Activated B cell treated with CpG ODN at 0.5 μM for 24 hours (primary cell): ENCODE measurements at regions of chr2 and their contacts with region 1.

Region 1: DNA sequence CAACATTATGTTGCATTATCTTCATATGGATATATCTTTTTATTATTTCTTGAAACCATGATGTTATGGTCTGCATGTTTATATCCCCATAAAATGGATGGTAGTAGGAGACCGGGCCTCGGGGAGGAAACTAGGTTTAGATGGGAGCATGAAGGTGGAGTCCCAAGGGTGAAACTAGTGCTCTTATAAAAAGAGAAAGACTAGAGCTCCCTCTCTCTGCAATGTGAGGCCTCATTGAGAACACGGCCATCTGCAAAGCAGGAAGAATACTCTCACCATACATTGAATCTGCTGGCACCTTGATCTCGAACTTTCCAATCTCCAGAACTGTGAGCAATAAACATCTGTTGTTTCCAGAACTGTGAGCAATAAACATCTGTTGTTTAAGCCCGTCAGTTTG is 64.0 kb downstream of the NXPH2 start:
- DNase-seq: no peak
- ATAC-seq: no peak
- H3K4me3 Mint-ChIP-seq: no peak overlapping the region
- H3K27ac Mint-ChIP-seq: no peak overlapping the region
- H3K4me1 Mint-ChIP-seq: no peaks in the 10 kb centered on the region
- H3K27me3 Mint-ChIP-seq: peaks cover 5% of the 10 kb centered on the region
- CTCF ChIP-seq: no peak

Region 2: GRCh38 chr2:137865954-137866540 is 850.1 kb before region 1 on chr2:
- CTCF ChIA-PET with region 1: no interaction called
- POLR2A ChIA-PET with region 1: no interaction called
- intact Hi-C with region 1: loop called (anchors 2 kb)
- DNase-seq: peak; percentile 19
- ATAC-seq: peak; percentile 28
- H3K4me3 Mint-ChIP-seq: no peak overlapping the region
- H3K27ac Mint-ChIP-seq: no peak overlapping the region
- H3K4me1 Mint-ChIP-seq: no peaks in the 10 kb centered on the region
- H3K27me3 Mint-ChIP-seq: no peaks in the 10 kb centered on the region
- CTCF ChIP-seq: no peak

Region 3: DNA sequence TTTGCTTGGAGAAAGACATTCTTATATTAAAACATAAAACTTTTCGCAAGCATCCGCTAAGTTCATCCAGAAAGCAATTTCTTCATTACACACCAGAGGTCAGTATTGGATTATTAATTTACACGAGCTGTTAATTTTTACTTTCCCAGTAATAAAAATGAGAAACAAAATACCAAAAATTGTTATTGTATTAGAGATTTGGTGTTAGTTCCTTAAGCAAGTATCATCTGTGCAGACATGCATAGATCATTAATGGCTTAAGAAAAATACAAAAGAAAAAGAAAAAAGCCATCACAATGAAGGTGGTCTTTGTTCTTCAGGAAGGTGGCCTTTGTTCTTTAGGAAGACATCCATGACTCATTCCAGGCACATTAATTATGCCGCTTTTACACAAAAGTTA is 805.5 kb before region 1 on chr2:
- CTCF ChIA-PET with region 1: interaction called, 3 read pairs
- POLR2A ChIA-PET with region 1: no interaction called
- intact Hi-C with region 1: loop called (anchors 5 kb)
- DNase-seq: no peak
- ATAC-seq: no peak
- H3K4me3 Mint-ChIP-seq: no peak overlapping the region
- H3K27ac Mint-ChIP-seq: no peak overlapping the region
- H3K4me1 Mint-ChIP-seq: no peaks in the 10 kb centered on the region
- H3K27me3 Mint-ChIP-seq: peaks cover 2% of the 10 kb centered on the region
- CTCF ChIP-seq: no peak

Region 4: DNA sequence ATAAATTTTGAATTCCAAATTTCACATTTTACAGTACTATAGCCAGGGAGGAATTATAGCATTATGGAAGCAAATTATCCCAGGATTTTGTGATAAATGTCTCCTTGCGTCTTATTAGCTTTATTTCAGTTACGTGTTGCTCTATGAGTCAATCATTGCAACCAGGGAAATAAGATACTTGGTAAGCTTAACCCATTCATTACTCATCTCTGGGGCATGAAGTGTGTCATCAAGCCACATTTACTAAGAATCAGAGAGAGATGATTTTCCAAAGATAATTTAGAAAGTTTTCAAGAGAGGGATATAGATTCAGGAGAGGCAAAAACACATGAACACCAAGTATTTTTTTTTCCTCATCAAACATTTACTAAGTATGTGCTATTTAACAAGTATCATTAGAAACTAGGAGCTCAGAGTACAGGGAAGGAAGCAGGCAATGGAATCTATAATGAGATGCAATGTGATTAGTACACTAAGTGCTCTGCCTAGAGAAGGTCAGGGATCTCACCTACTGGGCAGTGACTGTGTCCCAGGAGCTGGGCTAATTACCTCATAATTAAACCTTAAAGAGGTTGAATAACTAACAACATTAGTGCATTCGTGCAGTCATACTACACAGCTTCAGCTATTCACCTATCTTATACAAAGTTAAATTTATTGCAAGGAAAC is 281.8 kb after region 1 on chr2:
- CTCF ChIA-PET with region 1: no interaction called
- POLR2A ChIA-PET with region 1: no interaction called
- intact Hi-C with region 1: no loop called
- DNase-seq: no peak
- ATAC-seq: no peak
- H3K4me3 Mint-ChIP-seq: no peak overlapping the region
- H3K27ac Mint-ChIP-seq: no peak overlapping the region
- H3K4me1 Mint-ChIP-seq: no peaks in the 10 kb centered on the region
- H3K27me3 Mint-ChIP-seq: no peaks in the 10 kb centered on the region
- CTCF ChIP-seq: no peak